Mammary epithelial cell (primary cell): ENCODE measurements at regions of chr2 and their contacts with region 1.

Region 1: DNA sequence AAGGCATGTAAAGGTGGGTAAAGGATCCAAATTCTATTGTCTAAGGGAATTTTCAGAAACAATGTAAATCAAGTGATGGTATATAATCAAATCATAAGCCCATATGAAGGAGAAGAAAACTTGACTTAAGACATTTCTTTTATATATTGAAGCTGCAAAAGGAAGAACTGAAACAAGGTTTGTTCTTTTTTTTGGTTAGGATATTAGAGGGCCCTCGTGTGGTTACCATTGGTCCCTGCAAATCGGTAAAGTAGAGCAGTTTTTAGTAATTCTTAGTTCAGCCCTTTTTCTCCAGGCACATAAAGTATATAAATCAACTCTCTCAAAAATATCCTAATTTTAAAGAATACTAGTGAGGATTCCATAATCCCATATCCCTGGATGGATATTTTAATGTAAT is 105.6 kb upstream of the STK17B start:
- DNase-seq: peak; percentile 28
- H3K4me3 ChIP-seq: no peak overlapping the region
- H3K27ac ChIP-seq: no peak overlapping the region
- H3K4me1 ChIP-seq: no peaks in the 10 kb centered on the region
- H3K27me3 ChIP-seq: no peaks in the 10 kb centered on the region
- CTCF ChIP-seq: peak; percentile 65 to 70

Region 2: GRCh38 chr2:196076778-196077568 is 200.0 kb before region 1 on chr2:
- CTCF ChIA-PET with region 1: interaction called, 5 read pairs
- dilution Hi-C with region 1: no loop called
- in situ Hi-C with region 1: no loop called
- intact Hi-C with region 1: loop called (anchors 1 kb)
- DNase-seq: no peak
- H3K4me3 ChIP-seq: no peak overlapping the region
- H3K27ac ChIP-seq: no peak overlapping the region
- H3K4me1 ChIP-seq: no peaks in the 10 kb centered on the region
- H3K27me3 ChIP-seq: no peaks in the 10 kb centered on the region
- CTCF ChIP-seq: no peak

Region 3: DNA sequence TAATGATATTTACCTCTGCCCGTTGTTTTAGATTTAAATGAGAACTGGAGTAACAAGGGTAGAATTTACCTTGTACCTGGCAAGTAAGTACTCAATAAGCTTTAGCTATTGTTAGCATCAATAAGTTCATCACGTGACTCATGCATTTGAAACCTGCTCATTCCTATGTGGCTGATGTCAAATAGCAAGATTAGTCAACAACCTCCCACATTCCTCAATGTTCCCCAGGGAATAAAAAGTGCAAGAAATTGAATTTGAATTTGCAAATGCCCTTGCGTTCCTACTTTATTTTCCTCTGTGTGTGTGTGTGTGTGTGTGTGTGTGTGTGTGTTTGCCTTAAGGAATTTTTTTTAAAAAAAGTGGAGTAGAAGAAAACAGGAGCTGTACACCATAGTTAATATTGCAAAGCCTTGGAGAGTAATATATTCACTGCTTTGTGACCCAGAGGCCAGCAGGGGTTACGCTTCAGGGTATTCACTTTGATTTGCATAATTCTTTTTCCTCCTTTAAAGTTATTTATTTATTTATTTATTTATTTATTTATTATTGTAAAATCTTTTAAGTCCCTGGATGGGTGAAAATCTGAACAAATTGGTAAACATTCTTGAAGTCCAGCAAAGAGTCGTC is 164.5 kb before region 1 on chr2:
- CTCF ChIA-PET with region 1: no interaction called
- dilution Hi-C with region 1: no loop called
- in situ Hi-C with region 1: no loop called
- intact Hi-C with region 1: no loop called
- DNase-seq: peak; percentile 55
- H3K4me3 ChIP-seq: no peak overlapping the region
- H3K27ac ChIP-seq: no peak overlapping the region
- H3K4me1 ChIP-seq: no peaks in the 10 kb centered on the region
- H3K27me3 ChIP-seq: no peaks in the 10 kb centered on the region
- CTCF ChIP-seq: no peak

Region 4: DNA sequence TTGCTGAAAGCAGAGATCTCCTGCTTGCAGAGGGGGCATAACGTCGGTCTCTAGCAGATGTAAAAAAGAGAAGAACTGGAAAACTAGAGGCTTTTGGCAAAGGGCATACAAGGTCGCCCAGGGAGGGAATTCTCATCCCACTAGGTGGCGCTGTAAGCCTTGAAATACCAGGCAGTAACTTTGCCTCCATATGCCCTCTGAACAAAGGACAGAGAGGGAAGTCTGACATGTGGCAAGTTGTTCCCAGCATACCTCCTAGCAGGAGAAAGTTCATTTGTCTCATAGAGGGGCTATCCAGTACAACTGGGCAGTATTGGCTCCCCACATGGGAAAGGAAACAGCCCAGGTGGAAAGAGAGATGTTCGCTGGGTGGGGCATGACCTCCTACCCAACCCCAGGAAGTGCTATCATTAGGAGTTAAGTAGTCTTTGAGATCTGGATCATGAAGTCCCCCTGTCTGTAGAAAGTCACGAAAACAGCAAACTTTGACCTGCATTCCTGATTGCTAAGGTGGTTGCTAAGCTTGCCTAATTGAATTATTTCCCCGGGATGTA is 145.5 kb before region 1 on chr2:
- CTCF ChIA-PET with region 1: no interaction called
- dilution Hi-C with region 1: no loop called
- in situ Hi-C with region 1: loop called in 1 of 2 experiments (anchors 10 kb)
- intact Hi-C with region 1: loop called (anchors 1 kb)
- DNase-seq: peak; percentile 35
- H3K4me3 ChIP-seq: no peak overlapping the region
- H3K27ac ChIP-seq: no peak overlapping the region
- H3K4me1 ChIP-seq: no peaks in the 10 kb centered on the region
- H3K27me3 ChIP-seq: no peaks in the 10 kb centered on the region
- CTCF ChIP-seq: peak; percentile 57 to 59

Region 5: DNA sequence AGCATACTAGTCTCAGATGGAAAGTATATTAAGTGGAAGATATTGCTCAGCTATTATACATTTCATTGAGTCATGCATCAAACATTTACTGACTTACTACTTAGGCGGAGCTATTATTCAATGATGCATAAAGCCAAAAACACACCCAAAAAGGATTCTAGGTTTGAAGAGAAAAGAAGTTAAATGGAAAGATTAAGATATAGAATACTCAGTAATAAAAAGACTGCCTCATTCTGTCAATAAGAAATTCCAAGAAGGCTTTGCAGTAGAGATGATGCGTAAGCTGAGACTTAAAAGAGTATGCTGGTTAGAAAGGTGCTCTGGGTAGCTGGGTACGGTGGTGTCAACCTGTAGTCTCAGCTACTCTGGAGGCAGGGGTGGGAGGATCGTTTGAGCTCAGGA is 133.3 kb before region 1 on chr2:
- CTCF ChIA-PET with region 1: interaction called, 11 read pairs
- dilution Hi-C with region 1: no loop called
- in situ Hi-C with region 1: loop called in 1 of 2 experiments (anchors 10 kb)
- intact Hi-C with region 1: no loop called
- DNase-seq: no peak
- H3K4me3 ChIP-seq: no peak overlapping the region
- H3K27ac ChIP-seq: no peak overlapping the region
- H3K4me1 ChIP-seq: no peaks in the 10 kb centered on the region
- H3K27me3 ChIP-seq: no peaks in the 10 kb centered on the region
- CTCF ChIP-seq: no peak

Region 6: GRCh38 chr2:196182439-196183171 is 94.4 kb before region 1 on chr2:
- CTCF ChIA-PET with region 1: no interaction called
- dilution Hi-C with region 1: no loop called
- in situ Hi-C with region 1: no loop called
- intact Hi-C with region 1: no loop called
- DNase-seq: no peak
- H3K4me3 ChIP-seq: no peak overlapping the region
- H3K27ac ChIP-seq: no peak overlapping the region
- H3K4me1 ChIP-seq: no peaks in the 10 kb centered on the region
- H3K27me3 ChIP-seq: no peaks in the 10 kb centered on the region
- CTCF ChIP-seq: no peak

Region 7: GRCh38 chr2:196233021-196233804 is 43.8 kb before region 1 on chr2:
- CTCF ChIA-PET with region 1: no interaction called
- dilution Hi-C with region 1: no loop called
- in situ Hi-C with region 1: no loop called
- intact Hi-C with region 1: loop called (anchors 2 kb)
- DNase-seq: peak; percentile 95
- H3K4me3 ChIP-seq: peak overlapping the region in 2 of 3 experiments; percentile 6 to 15
- H3K27ac ChIP-seq: peak overlapping the region; percentile 97
- H3K4me1 ChIP-seq: peaks cover 37% of the 10 kb centered on the region
- H3K27me3 ChIP-seq: no peaks in the 10 kb centered on the region
- CTCF ChIP-seq: no peak

Region 8: GRCh38 chr2:196337208-196337953 is 60.4 kb after region 1 on chr2:
- CTCF ChIA-PET with region 1: interaction called, 3 read pairs
- dilution Hi-C with region 1: no loop called
- in situ Hi-C with region 1: no loop called
- intact Hi-C with region 1: loop called (anchors 2 kb)
- DNase-seq: peak; percentile 16
- H3K4me3 ChIP-seq: no peak overlapping the region
- H3K27ac ChIP-seq: no peak overlapping the region
- H3K4me1 ChIP-seq: no peaks in the 10 kb centered on the region
- H3K27me3 ChIP-seq: peaks cover 2% of the 10 kb centered on the region
- CTCF ChIP-seq: peak; percentile 25 to 57

Region 9: GRCh38 chr2:196750982-196751635 is 474.1 kb after region 1 on chr2:
- CTCF ChIA-PET with region 1: no interaction called
- dilution Hi-C with region 1: no loop called
- in situ Hi-C with region 1: loop called in 1 of 2 experiments (anchors 25 kb)
- intact Hi-C with region 1: no loop called
- DNase-seq: peak; percentile 50
- H3K4me3 ChIP-seq: no peak overlapping the region
- H3K27ac ChIP-seq: no peak overlapping the region
- H3K4me1 ChIP-seq: no peaks in the 10 kb centered on the region
- H3K27me3 ChIP-seq: no peaks in the 10 kb centered on the region
- CTCF ChIP-seq: peak; percentile 84 to 94